Activated naive CD4-positive, alpha-beta T cell treated with anti-CD3 and anti-CD28 coated beads for 36 hours (primary cell): ENCODE measurements at regions of chr7 and their contacts with region 1.

Region 1: GRCh38 chr7:89002981-89003956 is 207.7 kb upstream of the TEX47 start:
- DNase-seq: no peak
- H3K4me3 Mint-ChIP-seq: peak overlapping the region; percentile 49
- H3K27ac Mint-ChIP-seq: peak overlapping the region; percentile 79
- H3K4me1 Mint-ChIP-seq: peaks cover 28% of the 10 kb centered on the region
- H3K27me3 Mint-ChIP-seq: peaks cover 2% of the 10 kb centered on the region

Region 2: GRCh38 chr7:88244258-88244657 is 759.0 kb before region 1 on chr7:
- CTCF ChIA-PET with region 1: no interaction called
- intact Hi-C with region 1: no loop called
- DNase-seq: no peak
- H3K4me3 Mint-ChIP-seq: no peak overlapping the region
- H3K27ac Mint-ChIP-seq: no peak overlapping the region
- H3K4me1 Mint-ChIP-seq: no peaks in the 10 kb centered on the region
- H3K27me3 Mint-ChIP-seq: peaks cover 16% of the 10 kb centered on the region

Region 3: DNA sequence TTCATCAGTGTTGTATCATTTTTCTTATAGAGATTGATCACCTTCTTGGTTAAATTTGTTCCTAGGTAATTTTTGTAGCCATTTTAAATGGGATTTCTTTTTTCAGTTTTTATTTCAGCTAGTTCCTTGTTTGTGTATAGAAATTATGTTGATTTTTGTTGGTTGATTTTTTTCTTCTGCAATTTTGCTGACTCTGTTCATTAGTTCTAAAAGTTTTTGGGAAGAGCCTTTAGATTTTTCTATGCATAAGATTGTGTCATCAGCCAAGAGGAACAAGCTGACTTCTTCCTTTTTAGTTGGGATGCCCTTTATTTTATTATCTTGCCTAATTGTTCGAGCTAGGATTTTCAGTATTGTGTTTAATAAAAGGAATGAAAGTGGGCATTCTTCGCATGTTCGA is 14.4 kb after region 1 on chr7:
- CTCF ChIA-PET with region 1: no interaction called
- intact Hi-C with region 1: no loop called
- DNase-seq: no peak
- H3K4me3 Mint-ChIP-seq: no peak overlapping the region
- H3K27ac Mint-ChIP-seq: no peak overlapping the region
- H3K4me1 Mint-ChIP-seq: no peaks in the 10 kb centered on the region
- H3K27me3 Mint-ChIP-seq: peaks cover 8% of the 10 kb centered on the region

Region 4: GRCh38 chr7:89027835-89028234 is 24.6 kb after region 1 on chr7:
- CTCF ChIA-PET with region 1: interaction called, 5 read pairs
- intact Hi-C with region 1: loop called (anchors 1 kb)
- DNase-seq: no peak
- H3K4me3 Mint-ChIP-seq: no peak overlapping the region
- H3K27ac Mint-ChIP-seq: no peak overlapping the region
- H3K4me1 Mint-ChIP-seq: peaks cover 22% of the 10 kb centered on the region
- H3K27me3 Mint-ChIP-seq: peaks cover 1% of the 10 kb centered on the region

Region 5: GRCh38 chr7:89238156-89238555 is 234.9 kb after region 1 on chr7:
- CTCF ChIA-PET with region 1: no interaction called
- intact Hi-C with region 1: loop called (anchors 1 kb)
- DNase-seq: no peak
- H3K4me3 Mint-ChIP-seq: no peak overlapping the region
- H3K27ac Mint-ChIP-seq: no peak overlapping the region
- H3K4me1 Mint-ChIP-seq: peaks cover 20% of the 10 kb centered on the region
- H3K27me3 Mint-ChIP-seq: no peaks in the 10 kb centered on the region

Region 6: DNA sequence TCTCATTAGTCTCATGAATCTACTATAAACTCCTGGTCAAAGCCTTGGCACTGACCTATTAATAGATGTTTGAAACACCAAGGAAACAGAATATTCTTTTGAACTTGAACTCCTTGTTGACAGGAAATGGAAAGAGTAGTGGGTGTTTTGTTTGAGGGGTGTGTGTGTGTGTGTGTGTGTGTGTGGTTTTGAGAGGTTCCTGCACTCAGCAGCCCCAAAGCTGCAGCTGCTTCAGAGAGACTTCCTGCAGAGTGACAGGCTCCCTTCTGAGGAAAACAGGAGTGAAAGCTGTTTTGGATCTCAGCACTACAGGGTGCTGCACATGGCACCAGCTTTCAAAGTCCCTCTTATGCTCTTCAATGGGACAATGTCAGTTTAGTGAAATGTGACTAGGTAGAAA is 604.5 kb after region 1 on chr7:
- CTCF ChIA-PET with region 1: no interaction called
- intact Hi-C with region 1: loop called (anchors 1 kb)
- DNase-seq: peak; percentile 56
- H3K4me3 Mint-ChIP-seq: no peak overlapping the region
- H3K27ac Mint-ChIP-seq: peak overlapping the region; percentile 33
- H3K4me1 Mint-ChIP-seq: peaks cover 74% of the 10 kb centered on the region
- H3K27me3 Mint-ChIP-seq: no peaks in the 10 kb centered on the region

Region 7: GRCh38 chr7:90178679-90179278 is 1175.5 kb after region 1 on chr7:
- CTCF ChIA-PET with region 1: no interaction called
- intact Hi-C with region 1: loop called (anchors 1 kb)
- DNase-seq: peak; percentile 63
- H3K4me3 Mint-ChIP-seq: peak overlapping the region; percentile 17
- H3K27ac Mint-ChIP-seq: peak overlapping the region; percentile 94
- H3K4me1 Mint-ChIP-seq: peaks cover 35% of the 10 kb centered on the region
- H3K27me3 Mint-ChIP-seq: peaks cover 8% of the 10 kb centered on the region

Region 8: DNA sequence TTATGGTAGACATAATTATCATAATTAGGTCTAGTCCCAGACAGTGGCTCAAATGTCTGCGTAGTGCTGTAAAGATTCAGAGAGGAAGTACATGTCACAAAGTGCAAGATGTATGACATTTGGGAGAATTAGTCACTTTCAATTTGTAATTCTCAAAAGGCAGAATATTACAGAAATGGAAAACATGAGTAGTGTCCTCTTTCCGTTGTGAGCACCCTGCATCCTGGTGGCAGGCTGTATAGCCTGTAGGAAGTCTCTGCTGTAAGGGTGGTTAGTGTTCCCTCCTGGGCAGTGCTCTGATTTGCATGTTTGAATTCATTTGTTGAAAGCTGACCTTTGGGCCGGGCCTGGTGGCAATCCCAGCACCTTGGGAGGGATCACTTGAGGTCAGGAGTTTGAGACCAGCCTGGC is 1609.8 kb after region 1 on chr7:
- CTCF ChIA-PET with region 1: no interaction called
- intact Hi-C with region 1: loop called (anchors 10 kb)
- DNase-seq: peak; percentile 50
- H3K4me3 Mint-ChIP-seq: no peak overlapping the region
- H3K27ac Mint-ChIP-seq: peak overlapping the region; percentile 70
- H3K4me1 Mint-ChIP-seq: peaks cover 18% of the 10 kb centered on the region
- H3K27me3 Mint-ChIP-seq: peaks cover 14% of the 10 kb centered on the region